ENCODE measurements at regions of chr14 and their contacts with region 1.

Region 1: DNA sequence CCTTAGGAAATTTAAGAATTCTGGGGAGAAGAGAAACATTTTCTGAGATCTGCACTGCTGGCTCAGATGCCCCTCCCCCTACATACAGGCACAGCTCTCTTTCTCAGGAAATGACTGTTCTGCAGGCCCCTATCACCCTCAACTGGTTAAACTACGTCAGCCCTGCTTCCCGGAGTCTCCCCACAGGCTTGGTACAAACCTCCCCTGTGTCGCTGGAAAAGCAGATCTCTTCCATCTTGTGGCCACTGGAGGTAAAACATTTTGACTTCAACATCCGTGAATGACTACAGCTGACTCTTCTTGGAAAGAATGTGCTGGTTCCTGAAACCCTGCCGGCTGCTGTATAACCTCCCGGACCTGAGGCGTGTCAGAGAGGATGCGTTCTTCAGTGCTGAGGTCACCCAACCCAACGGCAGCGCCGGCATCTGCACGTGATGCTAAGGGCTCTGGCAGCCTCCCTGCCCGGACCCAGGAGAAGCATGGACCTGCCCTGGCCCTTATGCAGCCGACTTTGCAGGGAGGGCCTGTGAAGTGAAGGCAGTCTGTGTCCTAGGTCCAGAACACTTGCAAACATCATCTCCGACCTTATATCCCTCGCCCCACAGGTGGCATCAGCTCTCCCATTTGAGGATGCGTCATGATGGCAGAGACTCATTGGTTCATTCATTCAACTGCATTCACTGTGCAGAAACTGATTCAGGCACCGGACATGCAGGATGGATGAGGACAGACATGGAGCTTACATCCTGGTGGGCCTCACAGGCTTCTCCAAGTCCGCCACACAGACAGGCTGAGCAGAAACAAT is 129.3 kb downstream of the GCH1 start:
- DNase-seq: peak; percentile 99
- H3K4me3 ChIP-seq: no peak overlapping the region
- H3K27ac ChIP-seq: peak overlapping the region; percentile 99
- H3K4me1 ChIP-seq: peaks cover 28% of the 10 kb centered on the region
- H3K27me3 ChIP-seq: no peaks in the 10 kb centered on the region
- CTCF ChIP-seq: peak; percentile 66 to 71
- POLR2A ChIP-seq: peak; percentile 80

Region 2: GRCh38 chr14:54366736-54367735 is 406.3 kb before region 1 on chr14:
- CTCF ChIA-PET with region 1: interaction called, 15 read pairs
- POLR2A ChIA-PET with region 1: no interaction called
- dilution Hi-C with region 1: no loop called
- intact Hi-C with region 1: loop called (anchors 1 kb)
- DNase-seq: peak; percentile 69
- H3K4me3 ChIP-seq: no peak overlapping the region
- H3K27ac ChIP-seq: no peak overlapping the region
- H3K4me1 ChIP-seq: peaks cover 38% of the 10 kb centered on the region
- H3K27me3 ChIP-seq: peaks cover 0 to 1% of the 10 kb centered on the region in 2 experiments
- CTCF ChIP-seq: peak; percentile 59 to 67
- POLR2A ChIP-seq: no peak

Region 3: GRCh38 chr14:54509546-54510501 is 263.5 kb before region 1 on chr14 and contains the start of gene CGRRF1:
- CTCF ChIA-PET with region 1: interaction called, 18 read pairs
- POLR2A ChIA-PET with region 1: no interaction called
- dilution Hi-C with region 1: no loop called
- intact Hi-C with region 1: loop called (anchors 1 kb)
- DNase-seq: peak; percentile 99
- H3K4me3 ChIP-seq: peak within 1 kb of the TSS; percentile 20 to 92 (median 91)
- H3K27ac ChIP-seq: peak within 1 kb of the TSS; percentile 10
- H3K4me1 ChIP-seq: peaks cover 9% of the 10 kb centered on the region
- H3K27me3 ChIP-seq: no peaks in the 10 kb centered on the region
- CTCF ChIP-seq: peak; percentile 18 to 65
- POLR2A ChIP-seq: peak; percentile 88
- total RNA-seq, gene CGRRF1: 15.7 and 15.8 TPM in 2 replicates

Region 4: DNA sequence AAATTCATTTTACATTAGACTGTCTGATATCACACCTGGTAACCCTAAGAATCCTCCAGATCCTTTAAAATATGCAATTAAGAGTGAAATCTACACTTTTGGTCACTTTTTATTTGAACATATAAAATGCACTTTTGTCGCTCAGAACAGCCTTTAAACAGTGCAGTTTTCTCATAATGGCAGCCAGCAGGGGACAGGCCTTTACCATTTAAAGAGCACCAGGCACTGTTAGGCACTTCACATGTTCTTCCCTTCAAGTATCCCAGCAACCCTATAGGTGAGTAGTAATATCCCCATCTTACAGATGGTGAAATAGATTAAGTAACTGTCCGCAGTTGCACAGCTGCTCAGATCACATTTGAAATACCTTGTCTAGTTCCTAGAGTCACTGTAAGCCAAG is 217.7 kb before region 1 on chr14:
- CTCF ChIA-PET with region 1: interaction called, 24 read pairs
- POLR2A ChIA-PET with region 1: no interaction called
- dilution Hi-C with region 1: no loop called
- intact Hi-C with region 1: no loop called
- DNase-seq: no peak
- H3K4me3 ChIP-seq: no peak overlapping the region
- H3K27ac ChIP-seq: no peak overlapping the region
- H3K4me1 ChIP-seq: no peaks in the 10 kb centered on the region
- H3K27me3 ChIP-seq: peaks cover 2 to 3% of the 10 kb centered on the region in 2 experiments
- CTCF ChIP-seq: peak; percentile 5 to 6
- POLR2A ChIP-seq: no peak

Region 5: GRCh38 chr14:54683882-54684794 is 89.2 kb before region 1 on chr14:
- CTCF ChIA-PET with region 1: interaction called, 18 read pairs
- POLR2A ChIA-PET with region 1: no interaction called
- dilution Hi-C with region 1: no loop called
- intact Hi-C with region 1: loop called (anchors 1 kb)
- DNase-seq: peak; percentile 81
- H3K4me3 ChIP-seq: no peak overlapping the region
- H3K27ac ChIP-seq: peak overlapping the region; percentile 95
- H3K4me1 ChIP-seq: peaks cover 61% of the 10 kb centered on the region
- H3K27me3 ChIP-seq: no peaks in the 10 kb centered on the region
- CTCF ChIP-seq: no peak
- POLR2A ChIP-seq: no peak

Region 6: DNA sequence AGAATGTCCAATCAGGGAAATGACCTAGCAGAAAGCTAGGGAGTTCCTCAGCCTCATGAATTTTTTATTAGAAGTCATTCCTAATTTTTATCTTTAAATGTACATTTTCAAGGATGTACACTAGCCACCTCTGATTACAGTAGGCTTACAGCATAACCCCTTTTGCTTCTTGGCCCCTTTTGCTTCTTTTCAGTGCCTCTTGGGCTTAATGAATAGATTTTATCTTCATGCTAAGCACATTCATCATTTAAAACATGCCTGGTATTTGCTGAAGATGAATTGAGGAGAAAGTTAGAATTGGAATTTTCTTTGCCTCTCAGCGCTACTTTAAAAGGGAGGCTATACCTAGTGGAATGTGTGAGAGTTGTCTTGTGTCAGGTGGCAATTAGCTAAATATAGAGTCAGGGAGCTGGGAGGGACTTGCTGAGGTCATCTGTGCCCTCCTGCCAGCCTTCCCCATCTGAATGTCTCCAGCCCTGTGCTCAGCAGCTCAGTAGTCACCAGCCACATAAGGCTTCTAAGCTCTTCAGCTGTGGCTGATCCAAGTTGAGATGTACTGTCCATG is 74.3 kb before region 1 on chr14:
- CTCF ChIA-PET with region 1: interaction called, 10 read pairs
- POLR2A ChIA-PET with region 1: no interaction called
- dilution Hi-C with region 1: no loop called
- intact Hi-C with region 1: no loop called
- DNase-seq: no peak
- H3K4me3 ChIP-seq: no peak overlapping the region
- H3K27ac ChIP-seq: no peak overlapping the region
- H3K4me1 ChIP-seq: peaks cover 15% of the 10 kb centered on the region
- H3K27me3 ChIP-seq: no peaks in the 10 kb centered on the region
- CTCF ChIP-seq: no peak
- POLR2A ChIP-seq: no peak

Region 7: GRCh38 chr14:54805521-54806322 is 32.3 kb after region 1 on chr14:
- CTCF ChIA-PET with region 1: interaction called, 14 read pairs
- POLR2A ChIA-PET with region 1: no interaction called
- dilution Hi-C with region 1: no loop called
- intact Hi-C with region 1: no loop called
- DNase-seq: peak; percentile 81
- H3K4me3 ChIP-seq: no peak overlapping the region
- H3K27ac ChIP-seq: no peak overlapping the region
- H3K4me1 ChIP-seq: no peaks in the 10 kb centered on the region
- H3K27me3 ChIP-seq: peaks cover 0 to 2% of the 10 kb centered on the region in 2 experiments
- CTCF ChIP-seq: peak; percentile 90 to 95
- POLR2A ChIP-seq: no peak

Region 8: DNA sequence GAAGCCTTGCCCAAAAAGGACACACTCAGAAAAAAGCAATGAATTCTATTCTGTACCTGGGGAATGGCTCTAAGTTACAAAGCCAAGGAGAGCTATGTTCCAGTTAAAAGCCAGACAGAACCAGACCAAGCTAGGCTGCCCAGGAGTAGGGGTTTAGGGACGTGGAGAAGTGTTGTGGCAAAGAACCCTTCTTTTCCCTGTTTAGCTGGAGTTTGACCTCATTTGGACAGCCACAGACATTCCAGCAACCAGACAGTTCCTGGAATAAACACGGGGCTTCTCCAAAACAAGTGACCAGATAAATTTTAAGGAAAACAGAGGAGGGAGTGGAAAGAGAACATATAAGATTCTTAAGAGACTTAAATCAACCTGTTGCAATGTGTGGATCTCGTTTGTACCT is 67.0 kb after region 1 on chr14:
- CTCF ChIA-PET with region 1: no interaction called
- POLR2A ChIA-PET with region 1: no interaction called
- dilution Hi-C with region 1: no loop called
- intact Hi-C with region 1: no loop called
- DNase-seq: no peak
- H3K4me3 ChIP-seq: no peak overlapping the region
- H3K27ac ChIP-seq: no peak overlapping the region
- H3K4me1 ChIP-seq: no peaks in the 10 kb centered on the region
- H3K27me3 ChIP-seq: no peaks in the 10 kb centered on the region
- CTCF ChIP-seq: no peak
- POLR2A ChIP-seq: no peak

Measured in endothelial cell of umbilical vein (primary cell).